Activated CD4-positive, alpha-beta T cell treated with anti-CD3 and anti-CD28 coated beads for 36 hours (primary cell): ENCODE measurements at regions of chr6 and their contacts with region 1.

Region 1: DNA sequence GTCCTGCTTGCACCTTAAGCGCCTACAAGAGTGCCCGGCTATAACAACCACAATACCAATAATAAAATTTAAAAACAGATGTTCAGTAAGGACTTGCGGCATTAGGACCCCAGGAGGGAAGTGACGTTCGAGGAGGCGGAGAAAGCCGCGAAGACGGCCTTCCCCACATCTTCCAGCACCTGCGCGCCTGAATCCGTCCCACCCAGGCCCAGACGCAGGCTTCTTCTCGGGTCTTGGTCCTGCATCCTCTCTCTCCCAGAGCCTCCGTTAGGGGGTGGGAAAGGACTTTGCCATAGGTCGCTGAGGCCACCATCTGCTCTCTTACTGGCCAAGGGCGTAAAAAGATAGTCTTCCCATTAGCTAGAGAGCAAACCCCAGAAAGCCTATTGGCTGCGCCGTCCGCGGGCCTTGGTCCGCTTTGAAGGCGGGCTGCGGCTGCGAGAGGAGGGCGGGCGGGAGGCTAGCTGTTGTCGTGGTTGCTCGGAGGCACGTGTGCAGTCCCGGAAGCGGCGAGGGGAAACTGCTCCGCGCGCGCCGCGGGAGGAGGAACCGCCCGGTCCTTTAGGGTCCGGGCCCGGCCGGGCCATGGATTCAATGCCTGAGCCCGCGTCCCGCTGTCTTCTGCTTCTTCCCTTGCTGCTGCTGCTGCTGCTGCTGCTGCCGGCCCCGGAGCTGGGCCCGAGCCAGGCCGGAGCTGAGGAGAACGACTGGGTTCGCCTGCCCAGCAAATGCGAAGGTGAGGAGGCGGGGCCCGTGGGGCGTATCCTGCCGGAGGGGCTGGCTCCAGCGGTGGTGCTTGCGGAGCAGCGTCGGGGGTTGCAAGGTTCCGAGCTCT is at the start of gene CNPY3:
- DNase-seq: peak; percentile 98
- ATAC-seq: peak; percentile 88
- H3K4me3 Mint-ChIP-seq: peak within 1 kb of the TSS; percentile 84
- H3K27ac Mint-ChIP-seq: peak within 1 kb of the TSS; percentile 93
- H3K4me1 Mint-ChIP-seq: peaks cover 40% of the 10 kb centered on the region
- H3K27me3 Mint-ChIP-seq: no peaks in the 10 kb centered on the region
- total RNA-seq, gene CNPY3: 33.0 to 34.3 TPM

Region 2: DNA sequence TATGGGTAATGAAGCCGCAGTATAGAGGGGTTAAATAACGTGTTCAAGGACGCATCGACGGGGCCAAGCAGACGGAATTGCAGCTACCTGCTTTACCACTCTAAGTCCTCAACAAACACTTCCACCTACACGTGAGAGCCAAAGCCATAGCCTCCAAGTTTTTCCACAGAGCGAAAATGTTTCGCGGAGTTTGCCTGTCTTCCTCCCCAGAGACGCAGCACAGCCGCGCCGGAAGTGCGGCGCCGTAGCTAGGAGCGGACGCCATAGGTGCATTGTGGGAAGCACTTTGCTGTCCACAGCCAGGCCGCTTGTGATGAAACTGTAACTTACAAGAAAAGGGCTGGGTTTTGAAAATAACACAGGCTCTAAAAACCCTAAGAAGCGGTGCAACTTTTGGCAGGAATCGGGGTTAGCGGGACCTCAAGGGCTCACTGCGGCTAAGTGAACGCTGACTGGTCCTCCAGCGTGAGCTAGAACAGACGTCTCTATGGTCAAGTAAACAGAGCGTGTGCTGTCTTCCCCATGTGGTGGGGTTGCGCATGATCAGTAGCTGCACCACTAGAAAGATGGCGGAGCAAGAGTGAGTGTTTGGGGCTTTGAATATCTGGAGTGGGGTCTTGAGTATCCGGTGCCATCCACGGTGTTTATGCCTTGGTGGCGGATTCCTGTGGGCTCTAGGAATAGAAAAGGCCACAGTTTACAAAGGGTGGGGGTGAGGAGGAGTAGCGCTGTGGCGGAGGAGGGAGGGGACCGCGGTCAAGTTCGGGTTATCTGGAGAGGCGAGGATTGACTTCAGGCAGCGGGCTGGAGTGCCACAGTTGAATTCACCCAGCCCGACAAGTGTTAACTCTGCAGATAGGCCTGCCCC is 49.6 kb before region 1 on chr6 and contains the start of gene RPL7L1:
- CTCF ChIA-PET with region 1: interaction called, 3 read pairs
- POLR2A ChIA-PET with region 1: interaction called, 15 read pairs
- intact Hi-C with region 1: loop called in 1 of 2 experiments (anchors 1 kb)
- DNase-seq: peak; percentile 89
- ATAC-seq: peak; percentile 96
- H3K4me3 Mint-ChIP-seq: peak within 1 kb of the TSS; percentile 99
- H3K27ac Mint-ChIP-seq: peak within 1 kb of the TSS; percentile 100
- H3K4me1 Mint-ChIP-seq: peaks cover 20% of the 10 kb centered on the region
- H3K27me3 Mint-ChIP-seq: no peaks in the 10 kb centered on the region
- total RNA-seq, gene RPL7L1: 124 to 152 TPM

Region 3: GRCh38 chr6:42978839-42979522 is 49.8 kb after region 1 on chr6 and contains the start of gene PEX6:
- CTCF ChIA-PET with region 1: interaction called, 4 read pairs
- POLR2A ChIA-PET with region 1: interaction called, 15 read pairs
- intact Hi-C with region 1: loop called (anchors 1 kb)
- DNase-seq: peak; percentile 98
- ATAC-seq: peak; percentile 95
- H3K4me3 Mint-ChIP-seq: peak within 1 kb of the TSS; percentile 89
- H3K27ac Mint-ChIP-seq: peak within 1 kb of the TSS; percentile 95
- H3K4me1 Mint-ChIP-seq: peaks cover 45% of the 10 kb centered on the region
- H3K27me3 Mint-ChIP-seq: no peaks in the 10 kb centered on the region
- total RNA-seq, gene PEX6: 10.7 to 14.6 TPM

Region 4: GRCh38 chr6:43053545-43054205 is 124.5 kb after region 1 on chr6 and contains the start of gene CUL7:
- CTCF ChIA-PET with region 1: no interaction called
- POLR2A ChIA-PET with region 1: interaction called, 3 read pairs
- intact Hi-C with region 1: loop called in 1 of 2 experiments (anchors 1 kb)
- DNase-seq: peak; percentile 96
- ATAC-seq: peak; percentile 99
- H3K4me3 Mint-ChIP-seq: peak within 1 kb of the TSS; percentile 99
- H3K27ac Mint-ChIP-seq: peak within 1 kb of the TSS; percentile 97
- H3K4me1 Mint-ChIP-seq: peaks cover 43% of the 10 kb centered on the region
- H3K27me3 Mint-ChIP-seq: no peaks in the 10 kb centered on the region
- total RNA-seq, gene CUL7: 16.3 to 18.0 TPM

Region 5: GRCh38 chr6:43247113-43247999 is 318.2 kb after region 1 on chr6:
- CTCF ChIA-PET with region 1: no interaction called
- POLR2A ChIA-PET with region 1: no interaction called
- intact Hi-C with region 1: loop called in 1 of 2 experiments (anchors 1 kb)
- DNase-seq: peak; percentile 94
- ATAC-seq: peak; percentile 99
- H3K4me3 Mint-ChIP-seq: peak overlapping the region; percentile 68
- H3K27ac Mint-ChIP-seq: peak overlapping the region; percentile 62
- H3K4me1 Mint-ChIP-seq: peaks cover 25% of the 10 kb centered on the region
- H3K27me3 Mint-ChIP-seq: peaks cover 14% of the 10 kb centered on the region

Region 6: GRCh38 chr6:43516697-43517504 is 587.7 kb after region 1 on chr6 and contains the starts of genes POLR1C and YIPF3:
- CTCF ChIA-PET with region 1: no interaction called
- POLR2A ChIA-PET with region 1: no interaction called
- intact Hi-C with region 1: loop called in 1 of 2 experiments (anchors 2 kb)
- DNase-seq: peak; percentile 98
- ATAC-seq: peak; percentile 93
- H3K4me3 Mint-ChIP-seq: no peak within 1 kb of the TSS
- H3K27ac Mint-ChIP-seq: no peak within 1 kb of the TSS
- H3K4me1 Mint-ChIP-seq: peaks cover 32% of the 10 kb centered on the region
- H3K27me3 Mint-ChIP-seq: no peaks in the 10 kb centered on the region
- total RNA-seq, gene POLR1C: 43.4 to 52.9 TPM
- total RNA-seq, gene YIPF3: 38.0 to 39.6 TPM

Region 7: DNA sequence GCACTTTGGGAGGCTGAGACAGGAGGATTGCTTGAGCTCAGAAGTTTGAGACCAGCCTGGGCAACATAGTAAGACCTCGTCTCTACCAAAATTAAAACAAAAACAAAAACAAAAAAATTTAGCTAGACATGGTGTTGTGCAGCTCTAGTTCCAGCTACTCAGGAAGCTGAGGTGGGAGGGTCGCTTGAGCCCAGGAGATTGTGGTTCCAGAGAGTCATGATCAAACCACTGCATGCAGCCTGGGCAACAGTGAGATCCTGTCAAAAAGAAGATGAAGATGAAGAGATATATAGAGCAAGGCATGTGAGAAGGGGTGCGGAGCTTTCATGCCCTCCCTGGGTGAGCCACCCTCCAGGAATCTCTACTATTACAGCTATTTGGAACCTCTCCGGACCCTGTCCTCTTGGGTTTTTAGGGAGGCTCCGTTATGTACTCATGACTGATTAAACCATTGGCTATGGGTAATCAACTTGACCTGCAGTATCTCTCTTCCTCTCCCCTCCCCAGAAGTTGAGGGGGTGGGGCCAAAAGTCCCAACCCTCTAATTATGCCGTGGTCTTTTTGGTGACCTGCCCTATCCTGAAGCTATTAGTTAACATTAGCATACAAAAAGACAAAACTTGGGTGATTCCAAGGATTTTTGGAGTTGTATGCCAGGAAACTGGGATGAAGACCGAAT is 655.8 kb after region 1 on chr6:
- CTCF ChIA-PET with region 1: no interaction called
- POLR2A ChIA-PET with region 1: no interaction called
- intact Hi-C with region 1: no loop called
- DNase-seq: no peak
- ATAC-seq: no peak
- H3K4me3 Mint-ChIP-seq: no peak overlapping the region
- H3K27ac Mint-ChIP-seq: no peak overlapping the region
- H3K4me1 Mint-ChIP-seq: peaks cover 14% of the 10 kb centered on the region
- H3K27me3 Mint-ChIP-seq: no peaks in the 10 kb centered on the region